Posterior cingulate gyrus (tissue), 11 donors: ENCODE measurements at regions of chr1 and their contacts with region 1.

Region 1: GRCh38 chr1:229661022-229661877 is 35.2 kb downstream of the URB2 start:
- DNase-seq: peak; percentile 73 to 98 (median 88)

Region 2: DNA sequence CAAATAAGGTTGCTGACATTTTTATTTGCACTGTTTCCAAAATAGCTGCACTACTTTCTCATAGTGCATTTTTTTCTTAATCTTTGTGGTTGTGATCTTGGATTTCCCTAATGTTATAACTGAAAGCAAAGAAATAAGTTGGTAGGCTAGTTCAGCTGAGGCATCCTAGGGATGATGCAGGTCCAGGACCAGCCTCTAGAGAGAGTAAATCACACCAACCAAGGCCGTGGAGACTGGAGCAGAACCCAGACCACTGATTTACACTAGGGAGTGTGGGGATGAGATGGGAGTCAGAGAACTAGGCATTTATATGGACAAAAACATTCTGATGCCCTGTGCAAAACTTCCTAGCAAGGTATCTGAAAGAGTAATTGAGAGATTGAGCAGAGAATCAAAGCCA is 69.3 kb after region 1 on chr1:
- intact Hi-C with region 1: no loop called
- DNase-seq: no peak

Region 3: GRCh38 chr1:229856009-229856650 is 194.9 kb after region 1 on chr1:
- intact Hi-C with region 1: loop called (anchors 10 kb)
- DNase-seq: peak in 7 of 10 donors; percentile 31 to 91 (median 56)

Region 4: DNA sequence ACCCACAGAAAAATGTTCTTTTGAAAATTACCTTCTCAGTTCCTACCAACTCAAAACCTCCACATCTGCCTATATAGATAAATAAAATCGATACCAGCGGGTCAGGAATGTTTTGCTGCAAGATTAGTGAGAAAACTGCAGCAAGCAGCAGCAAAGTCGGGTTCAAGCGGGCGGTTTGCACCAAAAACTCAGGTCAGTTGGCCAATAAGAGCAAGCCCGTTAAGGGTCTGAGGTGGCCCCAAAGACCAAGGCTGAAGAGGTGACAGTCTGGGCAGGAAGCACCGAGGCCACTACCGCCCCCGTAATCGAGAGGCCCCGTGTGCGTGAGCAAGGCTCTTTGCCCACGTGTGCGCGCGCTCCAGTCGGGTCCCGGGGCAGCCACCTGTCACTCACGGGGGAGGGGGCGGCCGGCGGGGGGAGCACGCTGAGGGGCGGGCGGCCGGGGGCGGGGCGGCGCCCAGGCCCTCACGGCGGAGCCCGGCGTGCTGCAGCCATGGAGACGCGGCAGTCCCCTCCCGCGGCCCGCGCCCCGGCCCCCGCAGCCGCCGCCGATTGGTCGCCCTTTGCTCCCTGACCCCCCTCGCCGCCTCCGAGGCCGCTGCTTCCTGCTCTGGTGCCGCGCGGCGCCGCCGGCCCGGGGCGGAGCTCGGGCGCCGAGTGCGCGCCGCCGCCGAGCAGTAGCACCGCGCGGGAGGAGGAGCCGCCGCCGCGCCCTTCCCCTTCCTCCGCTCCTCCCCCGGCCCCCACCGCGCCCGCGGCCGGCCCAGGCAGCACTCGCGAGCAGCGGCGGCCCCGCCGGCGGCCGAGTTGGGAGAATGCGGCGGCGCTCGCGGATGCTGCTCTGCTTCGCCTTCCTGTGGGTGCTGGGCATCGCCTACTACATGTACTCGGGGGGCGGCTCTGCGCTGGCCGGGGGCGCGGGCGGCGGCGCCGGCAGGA is 405.5 kb after region 1 on chr1 and contains the start of gene GALNT2:
- intact Hi-C with region 1: loop called (anchors 5 kb)
- DNase-seq: peak; percentile 81 to 98 (median 84)

Region 5: DNA sequence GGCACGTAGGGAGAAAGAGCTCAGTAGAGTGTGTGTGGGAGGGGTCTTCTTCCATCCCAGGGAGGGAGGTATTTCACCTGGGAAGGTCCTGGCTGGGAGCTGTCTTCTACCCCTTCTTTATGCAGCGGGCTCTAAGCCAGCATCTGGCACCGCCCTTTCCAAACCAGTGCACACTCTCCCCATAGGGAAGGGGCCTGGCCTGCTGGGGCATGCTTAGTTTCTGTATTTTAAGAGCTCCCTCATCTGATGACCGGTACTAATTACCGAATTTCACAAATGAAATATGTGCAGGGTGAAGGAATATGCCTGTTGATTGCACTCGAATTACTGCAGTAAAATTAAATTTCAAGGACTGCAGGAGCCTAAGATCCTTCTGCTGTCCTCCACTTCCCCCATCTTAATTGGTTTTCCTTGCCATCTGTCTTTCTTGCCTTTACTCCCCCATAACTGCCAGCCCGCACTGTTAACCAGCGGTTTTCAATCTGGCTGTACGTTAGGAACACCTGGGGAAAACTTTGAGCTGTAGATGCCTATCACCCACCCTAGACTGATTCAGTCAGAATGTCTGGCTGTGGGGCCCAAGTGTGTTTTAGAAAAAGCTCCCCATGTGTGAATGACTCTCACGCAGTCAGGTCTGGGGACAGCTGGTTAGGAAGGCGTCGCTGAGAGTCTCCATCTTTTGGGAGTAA is 425.9 kb after region 1 on chr1:
- intact Hi-C with region 1: loop called (anchors 5 kb)
- DNase-seq: no peak

Region 6: GRCh38 chr1:230167419-230167852 is 506.2 kb after region 1 on chr1:
- intact Hi-C with region 1: loop called (anchors 2 kb)
- DNase-seq: peak in 1 of 10 donors; percentile 15

Region 7: DNA sequence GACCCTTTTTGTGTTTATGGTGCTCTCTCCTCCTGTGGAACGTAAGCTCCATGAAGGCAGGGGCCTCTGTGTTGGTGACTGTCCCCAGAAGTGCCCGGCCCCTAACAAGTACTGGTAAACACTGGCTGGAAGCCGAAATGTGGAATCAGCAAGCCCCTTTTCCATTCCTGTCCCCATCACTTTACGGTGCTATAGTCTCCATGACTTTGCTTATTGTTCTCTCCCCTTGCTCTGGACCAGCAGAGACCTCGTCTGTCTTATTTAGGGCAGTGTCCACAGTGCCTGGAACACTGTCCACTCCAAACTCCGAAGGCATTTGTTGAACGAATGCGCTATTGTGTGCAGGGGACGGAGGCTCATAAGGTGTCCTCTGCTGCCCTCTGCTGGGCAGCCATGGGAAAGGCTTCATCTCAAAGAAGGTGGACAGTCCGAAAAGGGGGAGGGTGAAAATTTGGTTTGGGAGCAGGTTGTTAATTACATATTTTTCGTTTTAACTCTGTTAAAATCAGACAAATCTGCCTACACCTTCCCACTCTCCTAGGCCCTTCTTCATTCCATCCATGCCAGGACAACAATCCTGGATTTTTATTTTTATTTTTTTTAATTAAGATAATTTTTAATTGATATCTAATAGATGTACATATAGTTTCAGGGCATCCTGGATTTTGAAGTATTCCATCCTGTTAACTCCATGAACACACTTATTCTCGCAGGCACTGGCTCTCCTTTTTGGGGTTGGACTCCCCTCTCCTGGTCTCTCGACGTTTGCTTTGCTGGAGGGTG is 649.3 kb after region 1 on chr1:
- intact Hi-C with region 1: loop called (anchors 2 kb)
- DNase-seq: peak; percentile 61 to 97 (median 79)